ENCODE measurements at regions of chr19 and their contacts with region 1.

Region 1: DNA sequence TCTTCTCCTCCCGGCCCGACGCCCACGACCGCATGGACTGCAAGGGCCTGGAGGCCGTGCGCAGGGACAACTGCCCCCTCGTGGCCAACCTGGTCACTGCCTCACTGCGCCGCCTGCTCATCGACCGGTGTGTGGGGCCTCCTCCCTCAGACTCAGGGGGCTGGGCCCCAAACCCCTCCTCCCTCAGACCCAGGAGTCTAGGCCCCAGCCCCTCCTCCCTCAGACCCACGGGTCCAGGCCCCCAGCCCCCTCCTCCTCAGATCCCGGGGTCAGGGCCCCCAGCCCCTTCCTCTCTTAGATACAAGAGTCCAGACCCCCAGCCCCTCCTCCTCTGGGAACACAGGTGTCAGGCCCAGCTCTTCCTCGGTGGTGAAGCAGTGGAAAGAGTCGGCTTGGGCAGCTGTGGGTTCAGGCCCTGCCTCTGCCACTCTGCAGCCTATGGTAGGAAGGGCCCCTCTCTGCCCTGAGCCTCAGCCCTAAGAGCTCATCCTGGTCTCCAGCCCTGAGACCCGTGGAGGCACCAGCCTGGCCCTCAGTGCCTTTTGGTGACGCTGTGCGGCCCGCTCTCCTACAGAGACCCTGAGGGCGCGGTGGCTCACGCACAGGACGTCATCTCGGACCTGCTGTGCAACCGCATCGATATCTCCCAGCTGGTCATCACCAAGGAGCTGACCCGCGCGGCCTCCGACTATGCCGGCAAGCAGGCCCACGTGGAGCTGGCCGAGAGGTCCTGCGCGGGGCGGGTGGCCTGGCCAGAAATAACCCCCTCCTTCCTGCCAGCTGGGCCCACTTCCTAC is 3.7 kb upstream of the SPIB start:
- DNase-seq: peak; percentile 92
- H3K4me3 Mint-ChIP-seq: no peak overlapping the region
- H3K27ac Mint-ChIP-seq: no peak overlapping the region
- H3K4me1 Mint-ChIP-seq: peaks cover 13% of the 10 kb centered on the region
- H3K27me3 Mint-ChIP-seq: peaks cover 8% of the 10 kb centered on the region

Region 2: DNA sequence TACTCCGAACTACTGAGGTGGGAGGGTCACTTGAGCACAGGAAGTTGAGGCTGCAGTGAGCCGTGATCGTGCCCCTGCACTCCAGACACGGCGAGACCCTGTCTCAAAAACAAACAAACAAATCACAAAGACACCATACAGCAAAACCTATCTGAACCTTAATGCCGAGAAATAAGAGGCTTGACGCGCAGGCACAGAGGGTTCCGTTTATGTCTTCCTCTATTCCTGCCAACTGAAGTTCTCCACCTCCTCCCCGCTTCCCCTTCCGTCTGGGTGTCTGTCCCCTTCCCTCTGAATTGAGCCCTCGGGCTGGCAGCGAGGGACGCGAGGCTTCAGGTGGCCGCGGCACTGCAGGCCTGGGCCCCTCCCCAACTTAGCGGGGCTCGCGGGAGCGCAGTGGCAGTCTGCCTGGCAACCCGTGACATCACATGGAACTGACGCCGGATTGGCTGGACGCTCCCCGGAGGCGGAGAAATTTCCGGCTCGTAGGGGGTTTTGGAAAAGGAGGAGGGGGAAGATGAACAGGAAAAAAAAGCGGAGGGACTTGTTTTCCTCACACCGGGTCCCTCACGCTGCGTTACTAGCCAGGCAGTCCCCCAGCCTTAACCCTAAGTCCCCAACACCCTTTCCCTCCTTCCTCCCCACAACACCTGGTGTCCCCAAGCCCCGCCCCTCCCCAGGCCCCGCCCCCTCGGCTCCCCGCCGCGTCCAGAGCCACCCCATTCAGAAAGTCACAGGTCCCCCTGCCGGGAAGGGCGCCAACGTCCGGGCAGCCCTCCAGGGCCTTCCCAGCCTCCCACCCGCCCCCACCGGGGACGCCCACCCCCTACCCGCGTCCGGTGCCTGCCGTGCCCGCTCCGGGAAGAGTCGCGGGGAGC is 16.5 kb after region 1 on chr19:
- intact Hi-C with region 1: loop called (anchors 2 kb)
- DNase-seq: peak; percentile 98
- H3K4me3 Mint-ChIP-seq: peak overlapping the region; percentile 83
- H3K27ac Mint-ChIP-seq: peak overlapping the region; percentile 90
- H3K4me1 Mint-ChIP-seq: peaks cover 10% of the 10 kb centered on the region
- H3K27me3 Mint-ChIP-seq: peaks cover 15% of the 10 kb centered on the region

Region 3: DNA sequence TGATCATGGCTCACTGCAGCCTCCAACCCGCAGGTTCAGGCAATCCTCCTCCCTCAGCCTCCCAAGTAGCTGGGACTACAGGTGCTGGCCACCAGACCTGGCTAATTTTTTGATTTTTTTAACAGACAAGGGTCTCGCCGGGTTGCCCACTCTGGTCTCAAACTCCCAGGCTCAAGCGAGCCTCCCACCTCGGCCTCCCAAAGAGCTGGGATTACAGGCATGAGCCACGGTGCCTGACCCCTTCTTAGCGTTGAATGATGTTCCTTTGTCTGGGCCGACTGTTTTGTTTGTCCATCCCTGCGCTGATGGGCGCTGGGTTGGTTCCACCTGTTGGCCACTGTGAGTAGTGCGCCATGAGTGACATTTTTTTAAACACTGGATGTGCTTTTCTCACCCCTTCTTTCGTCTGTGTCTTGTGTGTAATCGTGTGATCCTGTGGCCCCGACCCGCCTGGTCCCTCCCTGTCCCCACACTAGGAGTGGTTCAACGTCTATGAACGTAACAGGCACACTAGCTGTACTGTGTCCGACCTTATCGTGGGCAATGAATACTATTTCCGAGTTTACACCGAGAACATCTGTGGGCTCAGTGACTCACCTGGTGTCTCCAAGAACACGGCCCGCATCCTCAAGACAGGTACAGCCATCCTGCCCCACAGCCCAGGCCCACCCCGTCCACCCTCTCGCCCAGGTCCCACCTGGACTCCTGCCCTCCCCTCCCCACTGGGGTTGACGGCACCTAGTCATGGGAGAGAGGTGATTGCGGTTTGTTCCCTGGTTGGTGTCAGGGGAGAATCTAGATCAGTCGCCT is 46.2 kb after region 1 on chr19:
- intact Hi-C with region 1: loop called (anchors 5 kb)
- DNase-seq: peak; percentile 90
- H3K4me3 Mint-ChIP-seq: peak overlapping the region; percentile 40
- H3K27ac Mint-ChIP-seq: no peak overlapping the region
- H3K4me1 Mint-ChIP-seq: peaks cover 12% of the 10 kb centered on the region
- H3K27me3 Mint-ChIP-seq: peaks cover 5% of the 10 kb centered on the region

Region 4: GRCh38 chr19:50500060-50500752 is 85.1 kb after region 1 on chr19:
- intact Hi-C with region 1: no loop called
- DNase-seq: peak; percentile 61
- H3K4me3 Mint-ChIP-seq: no peak overlapping the region
- H3K27ac Mint-ChIP-seq: no peak overlapping the region
- H3K4me1 Mint-ChIP-seq: no peaks in the 10 kb centered on the region
- H3K27me3 Mint-ChIP-seq: no peaks in the 10 kb centered on the region

Measured in activated CD4-positive, alpha-beta T cell treated with anti-CD3 and anti-CD28 coated beads, Interleukin-2, amount 10 ng/mL, durations not matched to agents 24 days and 14 days (primary cell).